Heart right ventricle (tissue), 16 donors: ENCODE measurements at regions of chr1 and their contacts with region 1.

Region 1: DNA sequence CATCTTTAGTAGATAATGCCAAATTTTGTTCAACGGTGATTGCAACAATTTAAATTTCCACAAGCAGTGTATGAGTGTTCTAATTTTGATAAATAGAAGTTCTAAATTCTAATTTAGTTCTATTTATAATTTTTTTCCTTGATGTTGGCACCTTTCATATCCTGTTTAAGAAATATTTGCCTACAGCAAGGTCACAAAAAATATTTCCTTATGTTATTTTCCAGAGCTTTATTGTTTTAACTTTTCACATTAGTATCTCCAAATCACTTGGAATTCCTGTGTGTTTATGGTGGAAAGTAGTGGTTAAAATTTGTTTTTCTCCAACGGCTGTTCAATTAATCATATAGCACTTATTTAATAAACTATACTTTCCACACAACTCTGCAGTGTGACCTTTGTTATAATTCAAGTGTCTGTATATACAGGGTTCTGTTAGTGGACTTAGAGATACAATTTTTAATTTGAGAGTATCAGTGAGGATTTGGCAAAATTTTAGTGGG is 94.3 kb upstream of the CD55 start:
- DNase-seq: no peak
- ATAC-seq: no peak
- H3K4me3 ChIP-seq: no peak overlapping the region
- H3K27ac ChIP-seq: no peak overlapping the region
- H3K4me1 ChIP-seq: no peaks in the 10 kb centered on the region
- H3K27me3 ChIP-seq: no peaks in the 10 kb centered on the region
- CTCF ChIP-seq: no peak

Region 2: GRCh38 chr1:206982216-206982615 is 245.0 kb before region 1 on chr1:
- intact Hi-C with region 1: no loop called
- DNase-seq: peak; percentile 24 to 45
- ATAC-seq: peak; percentile 49 to 87 (median 74)
- H3K4me3 ChIP-seq: no peak overlapping the region
- H3K27ac ChIP-seq: no peak overlapping the region
- H3K4me1 ChIP-seq: no peaks in the 10 kb centered on the region
- H3K27me3 ChIP-seq: peaks cover 0 to 27% (median 4%) of the 10 kb centered on the region in 7 donors
- CTCF ChIP-seq: peak; percentile 16 to 68 (median 57)

Region 3: DNA sequence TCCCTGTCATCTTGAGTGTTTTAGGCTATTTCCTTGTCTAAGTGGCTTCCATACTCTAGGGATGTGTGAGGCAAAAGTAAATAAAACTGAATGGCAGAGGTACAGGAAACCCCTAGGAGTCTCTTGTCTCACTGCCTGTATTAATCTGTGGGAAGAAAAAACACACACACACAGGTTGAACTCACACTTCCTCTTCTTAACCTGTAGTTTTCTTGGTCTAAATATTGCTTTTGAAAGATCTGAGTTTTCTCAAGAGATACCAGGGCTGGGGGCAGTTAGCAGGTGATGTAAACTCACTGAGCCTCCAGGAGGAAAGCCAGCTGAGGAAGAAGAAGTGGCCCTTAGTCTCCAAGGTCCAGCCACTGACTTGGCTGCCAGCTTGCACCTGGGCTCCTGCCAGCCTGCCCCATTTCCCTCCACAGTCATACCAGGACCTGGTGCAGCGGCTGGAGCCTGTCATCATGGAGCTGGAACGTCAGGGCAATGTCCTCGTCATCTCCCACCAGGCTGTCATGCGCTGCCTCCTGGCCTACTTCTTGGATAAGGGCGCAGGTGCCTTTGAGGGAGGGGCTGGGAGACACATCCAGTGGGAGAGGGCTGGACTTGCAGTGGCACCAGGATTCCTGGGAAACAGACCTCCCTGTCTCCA is 157.2 kb before region 1 on chr1:
- intact Hi-C with region 1: no loop called
- DNase-seq: peak; percentile 55 to 58
- ATAC-seq: peak; percentile 56 to 90 (median 76)
- H3K4me3 ChIP-seq: no peak overlapping the region
- H3K27ac ChIP-seq: peak overlapping the region in 8 of 10 donors; percentile 50 to 80 (median 71)
- H3K4me1 ChIP-seq: peaks cover under 1 to 90% (median 26%) of the 10 kb centered on the region in 9 donors
- H3K27me3 ChIP-seq: no peaks in the 10 kb centered on the region
- CTCF ChIP-seq: no peak

Region 4: GRCh38 chr1:207241164-207241934 is 14.2 kb after region 1 on chr1:
- intact Hi-C with region 1: loop called in 1 of 10 experiments (anchors 2 kb)
- DNase-seq: no peak
- ATAC-seq: peak in 2 of 8 donors; percentile 31 to 39
- H3K4me3 ChIP-seq: no peak overlapping the region
- H3K27ac ChIP-seq: no peak overlapping the region
- H3K4me1 ChIP-seq: peaks cover 0 to 9% (median 0%) of the 10 kb centered on the region in 9 donors
- H3K27me3 ChIP-seq: no peaks in the 10 kb centered on the region
- CTCF ChIP-seq: no peak

Region 5: GRCh38 chr1:207414606-207415108 is 187.5 kb after region 1 on chr1:
- intact Hi-C with region 1: no loop called
- DNase-seq: no peak
- ATAC-seq: no peak
- H3K4me3 ChIP-seq: no peak overlapping the region
- H3K27ac ChIP-seq: peak overlapping the region in 1 of 10 donors; percentile 90
- H3K4me1 ChIP-seq: peaks cover 0 to 60% (median 0%) of the 10 kb centered on the region in 9 donors
- H3K27me3 ChIP-seq: peaks cover 0 to 16% (median 0%) of the 10 kb centered on the region in 7 donors
- CTCF ChIP-seq: no peak